ENCODE measurements at regions of chr17 and their contacts with region 1.

Region 1: DNA sequence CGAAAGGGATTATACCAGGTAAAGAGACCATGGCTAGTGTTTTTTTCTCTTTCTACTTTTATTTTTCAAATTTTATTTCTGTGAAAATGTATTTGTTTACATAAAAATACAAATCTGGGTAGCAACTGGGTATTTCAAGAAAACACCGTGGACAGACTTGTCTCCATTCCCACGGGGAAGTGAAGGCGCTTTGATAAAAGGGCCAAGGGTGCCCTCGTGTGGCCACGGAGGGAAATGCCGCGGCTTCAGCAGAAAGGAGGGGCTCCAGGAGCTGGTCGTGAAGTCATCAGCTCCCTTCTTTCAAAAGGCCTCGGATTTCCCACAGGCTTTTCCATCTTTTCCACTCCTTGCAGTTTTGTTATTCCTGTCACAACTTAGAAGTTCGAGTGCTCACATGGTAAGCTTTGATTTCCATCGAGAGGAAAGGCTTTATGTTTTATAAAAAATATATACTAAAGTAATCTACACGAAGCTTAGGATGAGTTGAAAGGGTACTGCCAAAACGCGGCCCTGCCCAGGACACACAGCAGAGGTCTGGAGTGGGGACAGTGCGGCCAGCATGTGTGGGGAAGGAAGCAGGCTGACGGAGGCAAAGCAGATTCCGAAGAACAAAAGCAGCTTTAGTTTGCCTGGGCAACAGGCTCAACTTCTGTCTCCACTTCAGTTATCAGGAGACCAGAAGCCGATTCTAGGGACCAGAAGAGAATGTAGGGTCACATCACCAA is 15.3 kb upstream of the MNT start:
- DNase-seq: no peak
- ATAC-seq: peak; percentile 93
- H3K4me3 ChIP-seq: no peak overlapping the region
- H3K27ac ChIP-seq: no peak overlapping the region
- H3K4me1 ChIP-seq: no peaks in the 10 kb centered on the region
- H3K27me3 ChIP-seq: no peaks in the 10 kb centered on the region
- CTCF ChIP-seq: peak; percentile 97
- EP300 ChIP-seq: no peak
- POLR2A ChIP-seq: no peak
- RAD21 ChIP-seq: peak; percentile 88

Region 2: DNA sequence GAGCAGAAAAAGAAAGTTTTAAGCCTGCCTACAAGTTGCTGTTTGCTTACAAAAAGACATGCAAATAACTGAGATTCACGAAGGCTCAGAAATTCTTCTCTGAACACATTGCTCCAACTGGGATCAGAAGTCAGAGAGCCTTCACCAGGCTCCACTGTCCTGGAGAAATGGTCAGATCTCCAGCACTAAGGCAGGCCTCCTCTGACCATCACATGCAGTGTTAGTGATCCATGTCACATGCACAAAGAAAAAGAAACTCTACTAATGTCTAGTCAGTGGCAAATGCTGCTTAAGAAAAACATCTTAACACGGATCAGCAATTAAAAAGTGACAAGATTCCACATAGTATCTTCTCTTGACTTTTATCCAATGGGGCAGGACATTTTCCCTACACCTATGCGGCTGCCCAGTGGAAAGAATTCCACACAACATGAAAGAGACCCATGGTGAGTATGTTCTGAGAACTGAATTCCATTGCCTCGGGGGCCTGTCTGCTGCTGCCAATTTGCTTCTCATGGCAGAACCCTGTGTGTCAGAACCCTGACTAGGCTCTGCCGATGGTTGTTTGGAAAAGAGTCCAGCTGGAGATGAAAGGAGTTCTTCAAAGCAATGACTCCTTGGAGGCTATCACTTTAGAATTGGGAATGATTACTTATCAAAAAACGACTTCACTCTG is 264.7 kb before region 1 on chr17:
- CTCF ChIA-PET with region 1: no interaction called
- POLR2A ChIA-PET with region 1: no interaction called
- RAD21 ChIA-PET with region 1: no interaction called
- SMC1A ChIA-PET with region 1: no interaction called
- in situ Hi-C with region 1: no loop called
- intact Hi-C with region 1: no loop called
- DNase-seq: no peak
- ATAC-seq: no peak
- H3K4me3 ChIP-seq: no peak overlapping the region
- H3K27ac ChIP-seq: no peak overlapping the region
- H3K4me1 ChIP-seq: no peaks in the 10 kb centered on the region
- H3K27me3 ChIP-seq: no peaks in the 10 kb centered on the region
- CTCF ChIP-seq: no peak
- EP300 ChIP-seq: no peak
- POLR2A ChIP-seq: no peak
- RAD21 ChIP-seq: no peak

Region 3: GRCh38 chr17:2233441-2233947 is 182.7 kb before region 1 on chr17:
- CTCF ChIA-PET with region 1: no interaction called
- POLR2A ChIA-PET with region 1: no interaction called
- RAD21 ChIA-PET with region 1: no interaction called
- SMC1A ChIA-PET with region 1: no interaction called
- in situ Hi-C with region 1: no loop called
- intact Hi-C with region 1: no loop called
- DNase-seq: no peak
- ATAC-seq: no peak
- H3K4me3 ChIP-seq: no peak overlapping the region
- H3K27ac ChIP-seq: no peak overlapping the region
- H3K4me1 ChIP-seq: peaks cover 43% of the 10 kb centered on the region
- H3K27me3 ChIP-seq: no peaks in the 10 kb centered on the region
- CTCF ChIP-seq: no peak
- EP300 ChIP-seq: no peak
- POLR2A ChIP-seq: no peak
- RAD21 ChIP-seq: no peak

Region 4: GRCh38 chr17:2374549-2375277 is 41.5 kb before region 1 on chr17:
- CTCF ChIA-PET with region 1: interaction called, 597 read pairs
- POLR2A ChIA-PET with region 1: interaction called, 4 read pairs
- RAD21 ChIA-PET with region 1: interaction called, 376 read pairs
- SMC1A ChIA-PET with region 1: interaction called, 364 read pairs
- in situ Hi-C with region 1: loop called (anchors 5 kb)
- intact Hi-C with region 1: no loop called
- DNase-seq: no peak
- ATAC-seq: no peak
- H3K4me3 ChIP-seq: no peak overlapping the region
- H3K27ac ChIP-seq: no peak overlapping the region
- H3K4me1 ChIP-seq: no peaks in the 10 kb centered on the region
- H3K27me3 ChIP-seq: no peaks in the 10 kb centered on the region
- CTCF ChIP-seq: no peak
- EP300 ChIP-seq: no peak
- POLR2A ChIP-seq: no peak
- RAD21 ChIP-seq: no peak

Region 5: GRCh38 chr17:2386400-2387085 is 29.6 kb before region 1 on chr17:
- CTCF ChIA-PET with region 1: interaction called, 597 read pairs
- POLR2A ChIA-PET with region 1: interaction called, 15 read pairs
- RAD21 ChIA-PET with region 1: interaction called, 376 read pairs
- SMC1A ChIA-PET with region 1: interaction called, 364 read pairs
- in situ Hi-C with region 1: no loop called
- intact Hi-C with region 1: loop called (anchors 1 kb)
- DNase-seq: no peak
- ATAC-seq: no peak
- H3K4me3 ChIP-seq: no peak overlapping the region
- H3K27ac ChIP-seq: no peak overlapping the region
- H3K4me1 ChIP-seq: peaks cover 4% of the 10 kb centered on the region; the same call in 1 of the 2 replicates
- H3K27me3 ChIP-seq: no peaks in the 10 kb centered on the region
- CTCF ChIP-seq: no peak
- EP300 ChIP-seq: no peak
- POLR2A ChIP-seq: 0 out of 2 replicates have a peak, but pooled peaks have one; percentile 16
- RAD21 ChIP-seq: no peak

Region 6: DNA sequence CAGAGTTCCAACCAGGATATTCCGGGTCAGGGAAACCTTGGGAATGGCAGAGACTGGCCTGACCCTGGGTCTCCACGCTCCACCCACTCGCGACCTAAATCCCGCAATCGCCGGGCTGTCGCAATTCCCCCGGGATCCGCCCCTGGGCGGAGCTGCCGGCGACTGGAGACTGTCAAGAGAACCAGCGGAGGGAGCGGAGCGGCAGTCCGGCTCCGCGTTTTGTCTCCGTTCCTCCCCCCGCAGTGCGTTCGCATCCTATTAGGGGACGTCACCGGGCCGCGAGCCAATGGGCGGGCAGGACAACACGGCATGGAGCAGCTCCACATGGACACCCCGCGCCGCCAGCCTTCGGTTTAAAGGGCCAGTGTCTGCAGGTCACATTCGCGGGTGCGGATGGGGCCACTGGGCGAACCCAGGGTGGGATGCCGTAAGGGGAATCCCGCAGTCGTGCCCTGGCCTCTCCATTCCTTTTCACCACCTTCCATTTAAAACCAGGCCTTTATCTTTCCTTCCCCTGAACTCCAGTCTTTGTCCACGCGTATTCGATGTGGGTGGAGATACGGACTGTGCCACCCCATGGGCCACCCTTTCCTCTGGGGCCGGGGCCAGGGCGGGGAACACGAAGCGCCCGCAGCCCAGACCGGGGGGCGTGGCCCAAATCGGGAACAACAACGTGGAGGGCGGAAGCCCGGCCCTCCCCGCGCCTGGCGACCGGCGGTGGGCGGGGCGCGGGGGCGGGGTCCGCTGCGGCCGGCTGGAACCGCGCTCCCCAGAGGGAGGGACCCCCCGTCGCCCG is 14.5 kb before region 1 on chr17:
- CTCF ChIA-PET with region 1: interaction called, 38 read pairs
- POLR2A ChIA-PET with region 1: interaction called, 4 read pairs
- RAD21 ChIA-PET with region 1: interaction called, 18 read pairs
- SMC1A ChIA-PET with region 1: interaction called, 11 read pairs
- in situ Hi-C with region 1: no loop called
- intact Hi-C with region 1: no loop called
- DNase-seq: peak; percentile 96
- ATAC-seq: peak; percentile 72
- H3K4me3 ChIP-seq: peak overlapping the region; percentile 87
- H3K27ac ChIP-seq: peak overlapping the region; percentile 95
- H3K4me1 ChIP-seq: peaks cover 11% of the 10 kb centered on the region
- H3K27me3 ChIP-seq: no peaks in the 10 kb centered on the region
- CTCF ChIP-seq: no peak
- EP300 ChIP-seq: 0 out of 4 replicates have a peak, but pooled peaks of 1 of the 2 experiments have one; percentile 10
- POLR2A ChIP-seq: 0 out of 2 replicates have a peak, but pooled peaks have one; percentile 41
- RAD21 ChIP-seq: no peak

Measured in GM12878 (cell line).